ENCODE measurements at regions of chr1 and their contacts with region 1.

Region 1: GRCh38 chr1:68442822-68443556 is 6.8 kb downstream of the RPE65 start:
- DNase-seq: peak; percentile 53
- H3K4me3 ChIP-seq: no peak overlapping the region
- H3K27ac ChIP-seq: no peak overlapping the region
- H3K4me1 ChIP-seq: no peaks in the 10 kb centered on the region
- H3K27me3 ChIP-seq: peaks cover 4 to 14% of the 10 kb centered on the region in 2 experiments
- CTCF ChIP-seq: peak; percentile 55 to 68
- POLR2A ChIP-seq: no peak

Region 2: DNA sequence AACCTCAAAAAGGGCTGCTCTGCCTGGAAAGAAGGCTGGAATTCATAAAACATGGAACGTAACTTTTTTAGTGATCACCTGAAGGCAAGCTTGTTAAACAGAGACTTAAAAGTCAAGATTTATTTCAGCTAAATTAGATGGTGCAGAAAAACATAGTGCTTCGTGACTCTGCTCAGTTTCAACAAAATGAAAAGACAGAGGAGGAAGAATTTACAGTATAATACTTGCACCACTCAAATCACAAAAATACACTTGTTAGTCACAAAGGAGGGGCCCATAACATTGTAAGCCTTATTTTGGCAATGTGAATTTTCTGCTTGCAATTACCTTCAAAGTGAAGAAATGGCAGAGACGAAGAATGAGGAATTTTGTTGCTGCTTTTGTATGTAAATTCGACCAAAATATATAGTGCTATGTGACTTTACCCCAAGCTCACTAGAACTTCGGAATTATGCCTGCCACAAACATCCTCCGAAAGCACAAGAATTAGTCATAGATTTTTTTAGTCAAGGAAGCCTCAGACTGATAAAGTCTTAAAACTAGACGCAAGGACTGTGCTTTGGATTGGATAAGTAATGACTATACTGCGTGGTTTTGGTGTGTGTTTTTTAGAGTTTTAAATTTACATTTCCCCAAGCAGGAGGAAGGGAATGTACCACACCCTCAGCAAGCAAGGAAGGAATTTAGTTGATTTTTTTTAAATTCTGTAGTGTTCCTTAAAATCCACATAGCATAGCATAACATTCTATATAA is 221.2 kb before region 1 on chr1:
- CTCF ChIA-PET with region 1: no interaction called
- POLR2A ChIA-PET with region 1: no interaction called
- dilution Hi-C with region 1: no loop called
- intact Hi-C with region 1: no loop called
- DNase-seq: peak; percentile 35
- H3K4me3 ChIP-seq: no peak overlapping the region
- H3K27ac ChIP-seq: no peak overlapping the region
- H3K4me1 ChIP-seq: peaks cover 14% of the 10 kb centered on the region
- H3K27me3 ChIP-seq: no peaks in the 10 kb centered on the region
- CTCF ChIP-seq: no peak
- POLR2A ChIP-seq: no peak

Region 3: GRCh38 chr1:68321084-68321685 is 121.8 kb before region 1 on chr1:
- CTCF ChIA-PET with region 1: interaction called, 13 read pairs
- POLR2A ChIA-PET with region 1: no interaction called
- dilution Hi-C with region 1: no loop called
- intact Hi-C with region 1: no loop called
- DNase-seq: peak; percentile 70
- H3K4me3 ChIP-seq: no peak overlapping the region
- H3K27ac ChIP-seq: no peak overlapping the region
- H3K4me1 ChIP-seq: no peaks in the 10 kb centered on the region
- H3K27me3 ChIP-seq: no peaks in the 10 kb centered on the region
- CTCF ChIP-seq: peak; percentile 72 to 88
- POLR2A ChIP-seq: no peak

Region 4: GRCh38 chr1:68352202-68352601 is 90.8 kb before region 1 on chr1:
- CTCF ChIA-PET with region 1: interaction called, 31 read pairs
- POLR2A ChIA-PET with region 1: no interaction called
- dilution Hi-C with region 1: no loop called
- intact Hi-C with region 1: no loop called
- DNase-seq: no peak
- H3K4me3 ChIP-seq: no peak overlapping the region
- H3K27ac ChIP-seq: no peak overlapping the region
- H3K4me1 ChIP-seq: no peaks in the 10 kb centered on the region
- H3K27me3 ChIP-seq: no peaks in the 10 kb centered on the region
- CTCF ChIP-seq: no peak
- POLR2A ChIP-seq: no peak

Region 5: DNA sequence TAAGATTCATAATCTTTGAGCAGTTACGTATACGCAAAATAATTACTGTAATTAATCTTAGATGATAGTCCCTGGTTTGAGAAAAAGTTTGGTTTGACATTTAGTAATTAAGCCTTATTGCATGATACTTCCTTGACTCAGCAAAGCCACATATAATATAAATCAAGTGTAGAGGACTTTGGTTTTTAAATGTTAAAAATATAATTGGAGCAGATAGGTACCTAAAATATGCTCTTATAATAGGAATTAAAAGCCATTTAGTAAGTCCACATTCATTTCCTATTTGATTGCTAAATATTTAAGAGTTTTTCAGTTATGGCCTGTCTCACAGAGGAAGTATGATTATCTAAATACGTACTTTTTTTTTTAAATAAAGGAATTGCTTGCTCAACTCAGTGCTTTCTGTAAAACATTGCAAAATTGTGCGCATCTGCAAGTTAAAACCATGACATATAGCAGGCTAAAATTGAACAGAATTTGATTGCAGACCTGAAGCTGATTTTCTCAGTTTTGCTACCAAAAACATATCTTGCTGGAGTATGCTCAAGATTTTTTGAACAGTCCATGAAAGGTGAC is 13.7 kb before region 1 on chr1:
- CTCF ChIA-PET with region 1: interaction called, 13 read pairs
- POLR2A ChIA-PET with region 1: no interaction called
- dilution Hi-C with region 1: no loop called
- intact Hi-C with region 1: no loop called
- DNase-seq: no peak
- H3K4me3 ChIP-seq: no peak overlapping the region
- H3K27ac ChIP-seq: no peak overlapping the region
- H3K4me1 ChIP-seq: no peaks in the 10 kb centered on the region
- H3K27me3 ChIP-seq: peaks cover 0 to 6% of the 10 kb centered on the region in 2 experiments
- CTCF ChIP-seq: no peak
- POLR2A ChIP-seq: no peak

Region 6: GRCh38 chr1:68453058-68453665 is 10.2 kb after region 1 on chr1:
- CTCF ChIA-PET with region 1: interaction called, 12 read pairs
- POLR2A ChIA-PET with region 1: no interaction called
- dilution Hi-C with region 1: no loop called
- intact Hi-C with region 1: no loop called
- DNase-seq: no peak
- H3K4me3 ChIP-seq: no peak overlapping the region
- H3K27ac ChIP-seq: no peak overlapping the region
- H3K4me1 ChIP-seq: no peaks in the 10 kb centered on the region
- H3K27me3 ChIP-seq: no peaks in the 10 kb centered on the region
- CTCF ChIP-seq: no peak
- POLR2A ChIP-seq: no peak

Region 7: DNA sequence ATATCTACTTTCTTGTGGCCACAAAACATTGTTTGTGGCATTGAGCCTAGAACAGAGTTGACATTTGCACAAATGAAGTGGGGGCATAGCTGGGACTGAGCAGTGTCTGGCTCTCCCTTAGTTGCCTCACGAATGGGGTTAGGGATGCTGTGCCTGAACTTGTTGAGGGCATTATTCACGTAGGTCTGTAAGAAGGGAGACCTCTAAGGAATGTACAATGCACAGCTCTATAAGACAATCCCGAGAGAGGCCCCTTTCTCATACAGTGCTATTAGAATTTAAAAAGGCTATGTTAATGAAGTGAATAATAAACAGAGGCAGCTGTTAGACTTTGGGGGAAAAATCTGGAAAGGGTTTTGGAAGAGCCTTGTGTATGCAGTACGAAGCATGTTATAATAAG is 172.3 kb after region 1 on chr1:
- CTCF ChIA-PET with region 1: no interaction called
- POLR2A ChIA-PET with region 1: no interaction called
- dilution Hi-C with region 1: no loop called
- intact Hi-C with region 1: no loop called
- DNase-seq: no peak
- H3K4me3 ChIP-seq: no peak overlapping the region
- H3K27ac ChIP-seq: no peak overlapping the region
- H3K4me1 ChIP-seq: no peaks in the 10 kb centered on the region
- H3K27me3 ChIP-seq: no peaks in the 10 kb centered on the region
- CTCF ChIP-seq: no peak
- POLR2A ChIP-seq: no peak